Activated B cell treated with CpG ODN at 0.5 μM for 24 hours (primary cell): ENCODE measurements at regions of chr12 and their contacts with region 1.

Region 1: DNA sequence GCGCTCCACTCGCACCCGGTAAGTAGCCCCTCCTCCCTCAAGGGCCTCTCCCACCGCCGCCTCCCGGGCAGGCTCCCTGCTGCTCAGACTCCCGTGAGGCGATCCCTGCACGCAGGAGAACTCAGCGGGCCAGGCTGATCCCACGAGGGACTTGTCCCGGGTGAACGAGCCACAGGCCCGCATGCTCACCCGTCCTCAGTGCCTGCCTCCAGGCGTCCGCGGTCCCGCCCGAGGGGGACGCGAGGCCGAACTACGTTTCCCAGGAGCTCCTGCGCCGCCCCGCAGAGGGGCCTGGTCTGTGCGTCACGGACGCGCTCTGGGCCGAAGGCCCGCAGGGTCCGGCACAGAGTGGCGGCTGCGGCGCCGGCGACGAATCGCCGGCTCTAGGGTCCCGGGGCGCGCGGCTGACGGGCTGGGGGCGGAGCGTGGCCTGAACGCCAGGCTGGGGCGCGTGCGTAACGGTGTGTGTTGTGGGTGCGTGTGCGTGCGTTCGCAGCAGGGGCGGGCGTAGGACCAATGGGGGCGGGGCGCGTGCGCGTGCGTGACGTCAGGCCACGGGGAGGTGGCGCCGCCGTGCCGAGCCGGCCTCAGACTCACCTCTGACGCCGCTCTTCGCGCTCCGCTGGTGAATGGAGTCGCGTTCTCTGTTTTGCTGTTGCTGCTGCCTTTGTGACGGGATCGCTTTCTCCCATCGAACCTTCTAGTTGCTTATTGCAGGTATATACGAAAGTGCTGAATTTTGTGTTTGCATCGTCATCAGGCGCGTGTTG is at the starts of genes ZNF10 and ZNF891:
- DNase-seq: peak; percentile 99
- ATAC-seq: peak; percentile 86
- H3K4me3 Mint-ChIP-seq: peak within 1 kb of the TSS; percentile 95
- H3K27ac Mint-ChIP-seq: peak within 1 kb of the TSS; percentile 98
- H3K4me1 Mint-ChIP-seq: peaks cover 21% of the 10 kb centered on the region
- H3K27me3 Mint-ChIP-seq: no peaks in the 10 kb centered on the region
- CTCF ChIP-seq: no peak
- total RNA-seq, gene ZNF10: 8.4 and 10.9 TPM in 2 replicates
- total RNA-seq, gene ZNF891: 2.9 and 4.0 TPM in 2 replicates

Region 2: DNA sequence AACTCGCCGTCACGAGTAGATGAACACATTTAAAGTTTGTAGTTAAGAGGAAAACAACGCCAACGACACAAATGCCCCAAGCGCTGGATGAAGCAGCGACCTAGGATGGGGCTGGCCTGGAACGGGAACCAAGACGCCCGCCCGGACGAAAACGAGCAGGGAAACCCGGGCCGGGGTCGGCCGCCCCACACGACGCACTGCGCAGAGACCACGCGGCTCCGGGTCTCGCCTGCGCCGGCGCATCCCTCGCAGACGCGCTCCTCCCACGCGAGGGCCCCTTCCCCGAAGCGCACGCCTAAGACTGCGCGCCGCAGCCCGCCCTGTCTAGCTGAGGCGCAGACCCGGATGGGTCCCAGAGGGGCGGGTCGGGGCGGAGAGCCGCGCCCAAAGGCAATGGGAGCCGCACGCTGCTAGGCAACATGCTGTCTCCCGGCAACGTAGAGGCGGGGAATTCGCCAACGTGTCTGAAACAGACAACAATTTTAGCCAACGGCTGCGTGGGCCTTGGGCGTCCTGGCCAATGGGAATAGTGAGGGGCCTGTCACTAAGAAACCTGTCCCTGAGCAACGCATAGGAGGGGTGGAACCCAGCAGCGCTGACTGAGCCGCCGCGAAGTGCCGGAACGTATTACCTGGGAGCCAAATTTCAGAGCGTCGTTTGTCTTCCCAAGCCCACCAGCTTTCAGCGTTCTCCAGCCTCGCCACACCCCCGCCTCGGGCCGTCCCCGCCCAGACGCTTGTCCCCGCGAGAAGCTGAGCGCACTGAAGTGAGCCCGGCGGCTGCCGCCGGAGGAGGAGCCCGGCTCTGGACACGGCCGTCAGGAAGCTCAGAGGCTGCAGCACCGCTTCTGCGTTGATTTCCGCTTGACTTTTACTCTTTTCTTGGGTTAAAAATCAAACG is 221.8 kb before region 1 on chr12:
- CTCF ChIA-PET with region 1: no interaction called
- POLR2A ChIA-PET with region 1: interaction called, 5 read pairs
- intact Hi-C with region 1: loop called (anchors 1 kb)
- DNase-seq: peak; percentile 91
- ATAC-seq: peak; percentile 90
- H3K4me3 Mint-ChIP-seq: peak overlapping the region; percentile 94
- H3K27ac Mint-ChIP-seq: peak overlapping the region; percentile 96
- H3K4me1 Mint-ChIP-seq: peaks cover 13% of the 10 kb centered on the region
- H3K27me3 Mint-ChIP-seq: peaks cover 2% of the 10 kb centered on the region
- CTCF ChIP-seq: no peak

Region 3: GRCh38 chr12:132956011-132956788 is 174.0 kb before region 1 on chr12 and contains the start of gene ZNF605:
- CTCF ChIA-PET with region 1: no interaction called
- POLR2A ChIA-PET with region 1: no interaction called
- intact Hi-C with region 1: loop called (anchors 1 kb)
- DNase-seq: peak; percentile 87
- ATAC-seq: peak; percentile 89
- H3K4me3 Mint-ChIP-seq: peak within 1 kb of the TSS; percentile 96
- H3K27ac Mint-ChIP-seq: peak within 1 kb of the TSS; percentile 93
- H3K4me1 Mint-ChIP-seq: peaks cover 33% of the 10 kb centered on the region
- H3K27me3 Mint-ChIP-seq: no peaks in the 10 kb centered on the region
- CTCF ChIP-seq: no peak
- total RNA-seq, gene ZNF605: 12.2 and 15.4 TPM in 2 replicates

Region 4: GRCh38 chr12:133165776-133166175 is 35.6 kb after region 1 on chr12:
- CTCF ChIA-PET with region 1: no interaction called
- POLR2A ChIA-PET with region 1: no interaction called
- intact Hi-C with region 1: no loop called
- DNase-seq: no peak
- ATAC-seq: no peak
- H3K4me3 Mint-ChIP-seq: no peak overlapping the region
- H3K27ac Mint-ChIP-seq: no peak overlapping the region
- H3K4me1 Mint-ChIP-seq: no peaks in the 10 kb centered on the region
- H3K27me3 Mint-ChIP-seq: no peaks in the 10 kb centered on the region
- CTCF ChIP-seq: no peak

Region 5: DNA sequence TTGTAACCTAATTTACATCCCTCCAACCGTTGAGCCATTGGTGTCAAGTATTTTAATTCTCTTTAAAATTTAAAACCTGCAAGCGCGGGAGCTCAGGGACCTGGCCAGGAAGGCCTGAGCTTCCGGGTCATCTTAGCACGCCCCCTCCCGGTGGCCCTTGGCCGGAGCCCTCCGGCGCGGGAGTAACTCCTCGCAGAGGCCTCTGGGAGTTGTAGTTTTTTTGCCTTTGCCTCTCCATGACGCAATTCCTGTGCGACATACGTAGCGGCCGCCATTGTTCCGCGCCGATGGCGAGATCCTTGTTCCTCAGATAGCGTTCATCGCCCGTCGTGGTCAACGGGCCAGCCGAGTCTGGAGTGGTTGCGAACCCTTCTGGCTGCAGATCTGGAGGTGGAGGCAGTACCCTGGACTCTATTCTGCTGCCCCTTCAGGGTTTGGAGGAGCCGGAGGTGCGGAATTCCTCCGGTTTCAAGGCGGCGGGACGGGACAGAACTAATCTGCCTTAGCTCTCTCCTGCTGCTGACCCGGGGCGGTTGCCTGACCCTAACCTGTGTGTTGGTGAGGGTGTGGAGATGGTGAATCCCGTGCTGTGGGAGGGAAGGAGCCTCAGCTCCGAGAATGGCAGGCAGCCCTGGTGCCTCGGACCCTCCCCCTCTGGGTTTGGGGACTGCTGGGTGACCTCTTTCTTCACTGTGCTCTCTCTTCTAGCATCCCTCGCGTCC is 51.2 kb after region 1 on chr12 and contains the start of gene ZNF268:
- CTCF ChIA-PET with region 1: no interaction called
- POLR2A ChIA-PET with region 1: interaction called, 19 read pairs
- intact Hi-C with region 1: loop called (anchors 1 kb)
- DNase-seq: peak; percentile 86
- ATAC-seq: peak; percentile 97
- H3K4me3 Mint-ChIP-seq: peak within 1 kb of the TSS; percentile 94
- H3K27ac Mint-ChIP-seq: peak within 1 kb of the TSS; percentile 89
- H3K4me1 Mint-ChIP-seq: peaks cover 20% of the 10 kb centered on the region
- H3K27me3 Mint-ChIP-seq: no peaks in the 10 kb centered on the region
- CTCF ChIP-seq: no peak
- total RNA-seq, gene ZNF268: 29.1 and 29.3 TPM in 2 replicates

Region 6: GRCh38 chr12:133264173-133264572 is 133.9 kb after region 1 on chr12:
- CTCF ChIA-PET with region 1: no interaction called
- POLR2A ChIA-PET with region 1: no interaction called
- intact Hi-C with region 1: no loop called
- DNase-seq: no peak
- ATAC-seq: no peak
- H3K4me3 Mint-ChIP-seq: no peak overlapping the region
- H3K27ac Mint-ChIP-seq: no peak overlapping the region
- H3K4me1 Mint-ChIP-seq: no peaks in the 10 kb centered on the region
- H3K27me3 Mint-ChIP-seq: no peaks in the 10 kb centered on the region
- CTCF ChIP-seq: no peak